ENCODE measurements at regions of chr19 and their contacts with region 1.

Region 1: GRCh38 chr19:46661020-46661731 is at the start of gene DACT3:
- DNase-seq: peak; percentile 96 to 100 (median 99)
- ATAC-seq: peak; percentile 89 to 90
- H3K4me3 Mint-ChIP-seq: peak within 1 kb of the TSS; percentile 80 to 93 (median 84)
- H3K27ac Mint-ChIP-seq: peak within 1 kb of the TSS; percentile 52 to 97 (median 83)
- H3K4me1 Mint-ChIP-seq: peaks cover 16 to 31% (median 23%) of the 10 kb centered on the region in 4 donors
- H3K27me3 Mint-ChIP-seq: peaks cover 9 to 31% (median 18%) of the 10 kb centered on the region in 5 donors
- polyA plus RNA-seq, gene DACT3: 0.13 TPM in 1 of 3 donors, not detected in the others

Region 2: GRCh38 chr19:46600384-46601317 is 60.5 kb before region 1 on chr19:
- POLR2A ChIA-PET with region 1: interaction called, 22 read pairs
- DNase-seq: peak; percentile 93 to 100 (median 98)
- ATAC-seq: peak; percentile 85
- H3K4me3 Mint-ChIP-seq: peak overlapping the region; percentile 95 to 100 (median 98)
- H3K27ac Mint-ChIP-seq: peak overlapping the region; percentile 100
- H3K4me1 Mint-ChIP-seq: peaks cover 22 to 60% (median 35%) of the 10 kb centered on the region in 4 donors
- H3K27me3 Mint-ChIP-seq: peaks cover 0 to 2% (median 0%) of the 10 kb centered on the region in 5 donors

Region 3: GRCh38 chr19:46610851-46611770 is 50.1 kb before region 1 on chr19:
- POLR2A ChIA-PET with region 1: interaction called, 27 read pairs
- DNase-seq: peak in 6 of 10 donors; percentile 30 to 56 (median 49)
- ATAC-seq: peak; percentile 56 to 64
- H3K4me3 Mint-ChIP-seq: peak overlapping the region; percentile 60 to 84 (median 76)
- H3K27ac Mint-ChIP-seq: peak overlapping the region; percentile 89 to 97 (median 94)
- H3K4me1 Mint-ChIP-seq: peaks cover 37 to 77% (median 66%) of the 10 kb centered on the region in 4 donors
- H3K27me3 Mint-ChIP-seq: no peaks in the 10 kb centered on the region

Region 4: GRCh38 chr19:46616631-46617322 is 44.4 kb before region 1 on chr19:
- POLR2A ChIA-PET with region 1: interaction called, 27 read pairs
- DNase-seq: no peak
- ATAC-seq: no peak
- H3K4me3 Mint-ChIP-seq: peak overlapping the region; percentile 54 to 92 (median 80)
- H3K27ac Mint-ChIP-seq: peak overlapping the region; percentile 79 to 99 (median 95)
- H3K4me1 Mint-ChIP-seq: peaks cover 29 to 88% (median 74%) of the 10 kb centered on the region in 4 donors
- H3K27me3 Mint-ChIP-seq: no peaks in the 10 kb centered on the region

Region 5: GRCh38 chr19:46648060-46648960 is 12.9 kb before region 1 on chr19:
- POLR2A ChIA-PET with region 1: interaction called, 14 read pairs
- DNase-seq: peak in 2 of 10 donors; percentile 38 to 41
- ATAC-seq: peak; percentile 78 to 84
- H3K4me3 Mint-ChIP-seq: peak overlapping the region in 9 of 10 donors; percentile 37 to 85 (median 65)
- H3K27ac Mint-ChIP-seq: peak overlapping the region in 5 of 10 donors; percentile 25 to 82 (median 73)
- H3K4me1 Mint-ChIP-seq: peaks cover 6 to 13% (median 11%) of the 10 kb centered on the region in 4 donors
- H3K27me3 Mint-ChIP-seq: peaks cover 16 to 43% (median 37%) of the 10 kb centered on the region in 5 donors

Region 6: GRCh38 chr19:46697204-46697960 is 36.2 kb after region 1 on chr19:
- POLR2A ChIA-PET with region 1: no interaction called
- DNase-seq: no peak
- ATAC-seq: no peak
- H3K4me3 Mint-ChIP-seq: no peak overlapping the region
- H3K27ac Mint-ChIP-seq: no peak overlapping the region
- H3K4me1 Mint-ChIP-seq: peaks cover 0 to 11% (median 9%) of the 10 kb centered on the region in 4 donors
- H3K27me3 Mint-ChIP-seq: no peaks in the 10 kb centered on the region

Measured in naive thymus-derived CD8-positive, alpha-beta T cell (primary cell).